ENCODE measurements at regions of chr3 and their contacts with region 1.

Region 1: DNA sequence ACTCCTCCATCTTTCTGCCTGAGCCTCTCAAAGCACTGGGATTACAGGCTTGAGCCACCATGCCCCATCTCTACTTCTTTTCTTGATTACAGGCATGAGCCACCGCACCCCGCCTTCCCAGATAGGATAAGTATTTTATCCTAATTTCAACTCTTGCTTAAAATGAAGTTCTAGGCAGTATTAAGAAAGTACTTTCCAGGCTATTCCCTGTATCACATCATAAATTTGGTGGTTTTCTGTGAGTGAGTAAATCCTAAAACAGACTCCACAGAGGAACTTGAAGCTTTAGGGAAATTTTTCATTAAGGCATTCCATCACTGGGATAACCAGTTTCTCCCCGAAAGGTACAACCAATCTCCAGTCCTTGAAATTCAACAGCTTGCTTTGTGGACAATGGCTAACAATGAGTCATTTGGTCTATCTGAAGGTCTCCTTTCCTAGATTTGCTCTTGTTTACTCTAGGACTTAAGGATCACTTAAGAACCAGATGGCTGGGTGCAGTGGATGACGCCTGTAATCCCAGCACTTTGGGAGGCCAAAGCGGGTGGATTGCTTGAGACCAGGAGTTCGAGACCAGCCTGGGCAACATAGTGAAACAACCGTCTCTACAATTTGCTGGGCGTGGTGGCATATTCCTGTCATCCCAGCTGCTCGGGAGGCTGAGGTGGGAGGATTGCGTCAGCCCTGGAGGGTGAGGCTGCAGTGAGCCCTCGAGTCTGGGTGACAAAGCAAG is 49.7 kb upstream of the SKIL start:
- DNase-seq: no peak

Region 2: DNA sequence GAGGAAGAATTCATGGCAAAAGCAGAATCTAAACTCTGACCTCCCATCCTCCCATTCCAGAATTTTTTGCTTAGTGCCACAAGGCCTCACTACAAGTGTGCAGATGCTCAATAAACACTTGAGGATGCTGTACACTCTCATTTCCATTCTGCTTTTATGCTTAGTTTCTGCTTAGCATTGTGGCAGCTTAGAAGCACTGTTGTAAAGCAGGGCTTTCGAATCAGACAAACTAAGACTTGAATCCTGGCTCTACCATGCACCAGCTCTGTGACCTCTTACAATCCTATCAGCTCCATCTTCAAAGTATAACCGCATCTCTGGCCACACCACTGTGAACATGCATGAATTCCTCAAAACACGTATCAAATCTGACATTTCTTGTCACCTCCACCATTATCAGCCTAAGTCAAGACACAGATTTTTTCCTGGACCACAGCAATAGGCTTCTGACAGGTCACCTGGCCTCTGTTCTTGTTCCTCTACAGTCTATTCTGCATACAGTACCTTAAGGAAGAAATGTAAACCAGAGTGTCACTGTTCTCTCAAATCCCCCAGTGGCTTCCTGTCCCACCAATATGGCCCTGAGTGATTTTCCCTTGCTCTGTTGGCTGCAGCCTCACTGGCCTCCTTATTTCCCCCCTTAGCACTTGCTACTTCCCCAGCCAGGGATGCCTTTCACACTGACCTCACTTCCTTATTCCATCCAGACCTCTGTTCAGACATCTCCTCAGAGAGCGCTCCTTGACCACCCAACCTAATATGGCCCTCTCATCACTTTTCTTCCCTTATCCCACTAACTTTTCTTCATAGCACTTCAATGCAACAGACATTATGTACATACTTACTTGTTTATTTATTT is 118.2 kb before region 1 on chr3:
- intact Hi-C with region 1: no loop called
- DNase-seq: no peak

Region 3: DNA sequence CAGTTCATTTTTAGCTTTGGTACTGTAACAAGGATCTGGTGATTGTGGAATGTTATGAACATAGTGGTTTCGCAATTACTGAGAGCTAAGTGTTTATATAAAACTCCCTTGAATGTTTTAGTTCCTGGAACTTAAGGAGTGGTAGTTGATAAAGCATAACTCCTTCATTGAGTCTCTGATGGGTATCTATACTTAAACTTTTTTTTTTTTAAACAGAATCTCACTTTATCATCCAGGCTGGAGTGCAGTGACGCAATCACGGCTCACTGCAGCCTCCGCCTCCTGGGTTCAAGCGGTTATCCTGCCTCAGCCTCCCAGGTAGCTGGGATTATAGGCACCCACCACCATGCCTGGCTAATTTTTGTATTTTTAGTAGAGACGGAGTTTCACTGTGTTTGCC is 74.3 kb before region 1 on chr3:
- intact Hi-C with region 1: no loop called
- DNase-seq: no peak

Region 4: GRCh38 chr3:170372190-170372879 is 64.5 kb after region 1 on chr3:
- intact Hi-C with region 1: loop called (anchors 10 kb)
- DNase-seq: no peak

Measured in posterior cingulate gyrus (tissue), 11 donors.